CD8-positive, alpha-beta T cell (primary cell): ENCODE measurements at regions of chr3 and their contacts with region 1.

Region 1: DNA sequence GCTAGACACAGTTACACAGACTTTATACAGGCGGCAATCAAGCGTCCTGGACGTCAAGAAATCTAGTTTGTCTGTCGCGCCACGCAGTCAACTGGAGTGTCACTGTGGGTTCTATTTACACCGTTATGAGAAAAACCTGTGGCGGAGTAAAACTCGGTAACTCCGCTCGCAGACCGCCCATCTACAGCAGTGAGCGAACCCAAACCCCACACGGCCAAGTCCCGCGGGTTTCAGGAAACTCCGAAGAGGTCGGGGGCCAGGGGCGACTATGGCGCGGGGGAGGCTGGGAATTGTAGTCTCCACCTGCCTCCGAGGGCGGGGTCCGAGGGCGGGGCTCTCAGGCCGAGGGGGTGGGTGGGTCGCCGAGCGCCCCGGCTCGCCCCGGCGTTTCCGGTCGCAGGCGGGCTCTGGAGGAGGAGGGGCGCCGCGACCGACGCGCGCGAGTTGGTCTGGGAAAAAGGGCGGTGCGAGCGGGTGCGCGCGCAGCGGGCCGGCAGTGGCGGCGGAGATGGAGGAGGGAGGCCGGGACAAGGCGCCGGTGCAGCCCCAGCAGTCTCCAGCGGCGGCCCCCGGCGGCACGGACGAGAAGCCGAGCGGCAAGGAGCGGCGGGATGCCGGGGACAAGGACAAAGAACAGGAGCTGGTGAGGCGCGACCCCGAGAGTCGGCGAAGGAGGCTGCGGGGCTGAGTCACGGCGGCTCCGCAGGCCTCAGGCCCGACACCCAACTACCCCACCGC is at the start of gene PSMD2:
- DNase-seq: peak; percentile 96 to 99 (median 98)
- ATAC-seq: peak; percentile 93
- H3K4me3 ChIP-seq: peak within 1 kb of the TSS; percentile 74 to 89
- H3K4me3 Mint-ChIP-seq: peak within 1 kb of the TSS; percentile 93
- H3K27ac ChIP-seq: peak within 1 kb of the TSS; percentile 64 to 70
- H3K27ac Mint-ChIP-seq: peak within 1 kb of the TSS; percentile 91
- H3K4me1 ChIP-seq: peaks cover 10% of the 10 kb centered on the region
- H3K4me1 Mint-ChIP-seq: peaks cover 32% of the 10 kb centered on the region
- H3K27me3 ChIP-seq: no peaks in the 10 kb centered on the region
- H3K27me3 Mint-ChIP-seq: no peaks in the 10 kb centered on the region
- CTCF ChIP-seq: no peak
- total RNA-seq, gene PSMD2: 168 to 174 TPM

Region 2: DNA sequence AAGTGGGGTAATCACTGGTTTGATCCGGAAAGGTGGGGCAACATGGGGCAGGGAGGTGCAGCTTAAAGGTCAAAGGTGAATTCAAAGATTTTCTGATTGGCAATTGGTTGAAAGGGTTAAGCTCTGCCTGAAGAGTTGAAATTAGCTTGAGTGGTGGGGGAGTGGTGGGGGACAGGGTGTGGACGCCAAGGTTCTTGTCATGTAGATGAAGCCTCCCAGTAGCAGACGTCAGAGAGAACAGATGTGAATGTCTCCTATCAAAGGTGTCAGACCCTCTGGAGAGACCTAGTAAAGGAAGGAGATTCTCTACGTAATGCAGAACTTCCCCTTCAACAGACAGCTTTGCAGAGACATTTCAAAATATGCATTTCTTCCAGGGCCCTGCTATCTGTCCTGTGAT is 344.1 kb before region 1 on chr3:
- CTCF ChIA-PET with region 1: no interaction called
- POLR2A ChIA-PET with region 1: no interaction called
- intact Hi-C with region 1: no loop called
- DNase-seq: no peak
- ATAC-seq: no peak
- H3K4me3 ChIP-seq: no peak overlapping the region
- H3K4me3 Mint-ChIP-seq: no peak overlapping the region
- H3K27ac ChIP-seq: no peak overlapping the region
- H3K27ac Mint-ChIP-seq: no peak overlapping the region
- H3K4me1 ChIP-seq: no peaks in the 10 kb centered on the region
- H3K4me1 Mint-ChIP-seq: no peaks in the 10 kb centered on the region
- H3K27me3 ChIP-seq: no peaks in the 10 kb centered on the region
- H3K27me3 Mint-ChIP-seq: no peaks in the 10 kb centered on the region
- CTCF ChIP-seq: no peak

Region 3: DNA sequence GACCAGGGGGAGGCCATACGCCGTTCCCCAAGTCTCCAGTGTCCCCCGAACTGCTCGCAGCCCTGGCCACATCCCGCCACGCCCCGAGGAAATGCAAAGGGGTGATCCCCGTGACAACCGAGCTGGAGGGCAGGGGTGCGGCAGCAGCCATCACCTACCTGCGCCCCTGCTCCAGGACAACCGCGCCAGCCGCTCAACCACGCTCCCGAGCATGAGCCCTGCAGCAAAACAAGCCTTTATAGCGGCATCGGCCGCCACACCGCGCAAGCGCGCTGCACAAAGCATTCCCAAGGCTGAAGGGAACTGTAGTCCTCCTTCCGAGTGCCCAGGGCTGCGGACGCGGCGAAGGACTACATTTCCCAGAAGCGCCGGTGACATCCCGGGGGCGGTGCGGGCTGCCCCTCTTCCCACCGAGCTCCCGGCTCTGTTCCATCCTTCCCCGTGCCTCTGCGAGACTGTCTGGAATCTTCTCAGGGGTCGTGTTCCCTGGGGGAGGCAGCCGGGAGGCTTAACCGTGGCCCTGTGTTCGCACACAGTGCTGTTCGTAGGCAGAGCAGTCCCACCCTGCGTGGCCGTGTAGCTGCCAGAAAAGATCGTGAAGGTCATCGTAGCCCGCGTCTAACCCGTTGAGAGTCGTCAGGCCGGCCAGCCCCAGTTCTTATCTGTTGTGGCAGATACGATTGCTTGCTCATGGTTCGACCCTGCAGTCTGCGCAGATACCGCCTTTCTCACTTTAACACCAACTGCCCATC is 281.1 kb before region 1 on chr3 and contains the start of gene ABCC5:
- CTCF ChIA-PET with region 1: no interaction called
- POLR2A ChIA-PET with region 1: no interaction called
- intact Hi-C with region 1: loop called in 1 of 2 experiments (anchors 2 kb)
- DNase-seq: peak; percentile 60 to 91 (median 80)
- ATAC-seq: peak; percentile 94
- H3K4me3 ChIP-seq: peak within 1 kb of the TSS; percentile 94 to 98
- H3K4me3 Mint-ChIP-seq: peak within 1 kb of the TSS; percentile 99
- H3K27ac ChIP-seq: peak within 1 kb of the TSS; percentile 51 to 56
- H3K27ac Mint-ChIP-seq: peak within 1 kb of the TSS; percentile 83
- H3K4me1 ChIP-seq: peaks cover 11% of the 10 kb centered on the region
- H3K4me1 Mint-ChIP-seq: peaks cover 32% of the 10 kb centered on the region
- H3K27me3 ChIP-seq: no peaks in the 10 kb centered on the region
- H3K27me3 Mint-ChIP-seq: peaks cover 12% of the 10 kb centered on the region
- CTCF ChIP-seq: peak; percentile 76
- total RNA-seq, gene ABCC5: 7.4 to 8.3 TPM

Region 4: GRCh38 chr3:184135149-184135910 is 163.6 kb before region 1 on chr3 and contains the start of gene EIF2B5:
- CTCF ChIA-PET with region 1: interaction called, 4 read pairs
- POLR2A ChIA-PET with region 1: interaction called, 3 read pairs
- intact Hi-C with region 1: loop called (anchors 1 kb)
- DNase-seq: peak; percentile 67 to 95 (median 87)
- ATAC-seq: peak; percentile 89
- H3K4me3 ChIP-seq: peak within 1 kb of the TSS; percentile 79 to 91
- H3K4me3 Mint-ChIP-seq: peak within 1 kb of the TSS; percentile 100
- H3K27ac ChIP-seq: peak within 1 kb of the TSS; percentile 76 to 83
- H3K27ac Mint-ChIP-seq: peak within 1 kb of the TSS; percentile 98
- H3K4me1 ChIP-seq: peaks cover 25% of the 10 kb centered on the region
- H3K4me1 Mint-ChIP-seq: peaks cover 41% of the 10 kb centered on the region
- H3K27me3 ChIP-seq: no peaks in the 10 kb centered on the region
- H3K27me3 Mint-ChIP-seq: no peaks in the 10 kb centered on the region
- CTCF ChIP-seq: no peak
- total RNA-seq, gene EIF2B5: 52.6 to 61.9 TPM

Region 5: DNA sequence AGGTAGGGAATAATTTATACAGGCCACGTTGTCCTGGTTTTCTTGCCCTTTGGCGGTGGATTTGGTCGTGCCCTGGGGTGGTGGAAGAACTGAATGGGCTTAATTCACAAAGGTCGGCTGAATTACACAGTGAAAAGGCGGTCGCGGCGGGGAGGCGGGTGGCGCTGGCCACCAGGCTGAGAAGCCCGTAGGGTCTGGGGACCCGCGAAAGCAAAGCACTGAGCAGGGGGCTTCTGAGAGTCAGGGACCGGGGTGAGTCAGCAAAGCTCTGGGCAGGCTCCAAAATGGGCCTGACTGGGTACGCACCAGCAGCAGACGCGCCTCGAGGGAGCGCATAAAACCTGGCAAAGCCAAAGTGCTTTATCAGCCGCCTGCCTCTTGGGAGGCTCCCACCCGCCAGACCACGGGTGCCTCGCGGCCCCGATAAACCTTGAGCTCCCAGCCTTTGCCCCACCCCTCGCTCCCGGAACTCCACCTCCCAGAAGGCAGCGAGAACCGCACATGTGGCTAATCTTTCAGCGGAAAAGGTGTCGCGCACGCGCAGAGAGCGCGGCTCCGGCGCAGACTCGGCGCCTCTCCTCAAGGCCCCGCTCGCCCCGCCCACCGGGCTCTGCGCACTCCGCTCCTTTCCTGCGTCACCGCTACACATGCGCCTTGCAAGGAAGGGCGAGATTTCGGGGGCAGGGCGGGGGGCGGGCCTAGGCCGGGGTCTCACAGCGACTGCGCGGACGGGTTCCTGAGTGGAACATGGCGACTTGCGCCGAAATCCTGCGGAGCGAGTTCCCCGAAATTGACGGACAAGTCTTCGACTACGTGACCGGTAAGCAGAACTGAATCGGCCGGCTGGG is 113.2 kb before region 1 on chr3 and contains the start of gene ABCF3:
- CTCF ChIA-PET with region 1: no interaction called
- POLR2A ChIA-PET with region 1: no interaction called
- intact Hi-C with region 1: loop called (anchors 1 kb)
- DNase-seq: peak; percentile 98 to 100 (median 99)
- ATAC-seq: peak; percentile 97
- H3K4me3 ChIP-seq: peak within 1 kb of the TSS; percentile 95 to 98
- H3K4me3 Mint-ChIP-seq: peak within 1 kb of the TSS; percentile 98
- H3K27ac ChIP-seq: peak within 1 kb of the TSS; percentile 82 to 83
- H3K27ac Mint-ChIP-seq: peak within 1 kb of the TSS; percentile 96
- H3K4me1 ChIP-seq: peaks cover 26% of the 10 kb centered on the region
- H3K4me1 Mint-ChIP-seq: peaks cover 42% of the 10 kb centered on the region
- H3K27me3 ChIP-seq: no peaks in the 10 kb centered on the region
- H3K27me3 Mint-ChIP-seq: no peaks in the 10 kb centered on the region
- CTCF ChIP-seq: no peak
- total RNA-seq, gene ABCF3: 192 to 193 TPM

Region 6: GRCh38 chr3:184229394-184230080 is 69.4 kb before region 1 on chr3 and contains the start of gene VWA5B2:
- CTCF ChIA-PET with region 1: interaction called, 6 read pairs
- POLR2A ChIA-PET with region 1: no interaction called
- intact Hi-C with region 1: loop called in 1 of 2 experiments (anchors 2 kb)
- DNase-seq: peak; percentile 54 to 89 (median 75)
- ATAC-seq: peak; percentile 97
- H3K4me3 ChIP-seq: peak within 1 kb of the TSS; percentile 52 to 80
- H3K4me3 Mint-ChIP-seq: peak within 1 kb of the TSS; percentile 76
- H3K27ac ChIP-seq: no peak within 1 kb of the TSS
- H3K27ac Mint-ChIP-seq: no peak within 1 kb of the TSS
- H3K4me1 ChIP-seq: peaks cover 14% of the 10 kb centered on the region
- H3K4me1 Mint-ChIP-seq: peaks cover 14% of the 10 kb centered on the region
- H3K27me3 ChIP-seq: peaks cover 21 to 31% of the 10 kb centered on the region in 2 experiments
- H3K27me3 Mint-ChIP-seq: peaks cover 49% of the 10 kb centered on the region
- CTCF ChIP-seq: peak; percentile 35
- total RNA-seq, gene VWA5B2: 0.28 to 0.65 TPM

Region 7: DNA sequence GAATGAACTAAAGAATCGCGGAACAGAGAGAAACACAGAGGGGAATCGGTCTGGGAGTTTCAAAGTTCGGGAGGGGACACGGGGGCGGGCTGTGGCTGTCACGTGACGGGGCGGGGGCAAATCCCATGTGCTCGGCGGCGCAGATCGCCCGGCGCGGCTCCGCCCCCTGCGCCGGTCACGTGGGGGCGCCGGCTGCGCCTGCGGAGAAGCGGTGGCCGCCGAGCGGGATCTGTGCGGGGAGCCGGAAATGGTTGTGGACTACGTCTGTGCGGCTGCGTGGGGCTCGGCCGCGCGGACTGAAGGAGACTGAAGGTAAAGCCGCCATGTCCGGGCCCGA is 15.4 kb after region 1 on chr3 and contains the start of gene EIF4G1:
- CTCF ChIA-PET with region 1: no interaction called
- POLR2A ChIA-PET with region 1: interaction called, 4 read pairs
- intact Hi-C with region 1: loop called (anchors 1 kb)
- DNase-seq: peak; percentile 83 to 98 (median 92)
- ATAC-seq: peak; percentile 78
- H3K4me3 ChIP-seq: peak within 1 kb of the TSS; percentile 60 to 64
- H3K4me3 Mint-ChIP-seq: peak within 1 kb of the TSS; percentile 87
- H3K27ac ChIP-seq: peak within 1 kb of the TSS; percentile 80 to 93
- H3K27ac Mint-ChIP-seq: peak within 1 kb of the TSS; percentile 94
- H3K4me1 ChIP-seq: peaks cover 23% of the 10 kb centered on the region
- H3K4me1 Mint-ChIP-seq: peaks cover 33% of the 10 kb centered on the region
- H3K27me3 ChIP-seq: no peaks in the 10 kb centered on the region
- H3K27me3 Mint-ChIP-seq: no peaks in the 10 kb centered on the region
- CTCF ChIP-seq: no peak
- total RNA-seq, gene EIF4G1: 220 to 235 TPM

Region 8: GRCh38 chr3:184335661-184336546 is 37.0 kb after region 1 on chr3:
- CTCF ChIA-PET with region 1: no interaction called
- POLR2A ChIA-PET with region 1: no interaction called
- intact Hi-C with region 1: loop called (anchors 1 kb)
- DNase-seq: peak; percentile 78 to 94 (median 86)
- ATAC-seq: peak; percentile 72
- H3K4me3 ChIP-seq: peak overlapping the region; percentile 50 to 63
- H3K4me3 Mint-ChIP-seq: peak overlapping the region; percentile 90
- H3K27ac ChIP-seq: peak overlapping the region; percentile 81 to 97
- H3K27ac Mint-ChIP-seq: peak overlapping the region; percentile 96
- H3K4me1 ChIP-seq: peaks cover 16% of the 10 kb centered on the region
- H3K4me1 Mint-ChIP-seq: peaks cover 25% of the 10 kb centered on the region
- H3K27me3 ChIP-seq: no peaks in the 10 kb centered on the region
- H3K27me3 Mint-ChIP-seq: no peaks in the 10 kb centered on the region
- CTCF ChIP-seq: no peak